ENCODE measurements at regions of chr17 and their contacts with region 1.

Region 1: DNA sequence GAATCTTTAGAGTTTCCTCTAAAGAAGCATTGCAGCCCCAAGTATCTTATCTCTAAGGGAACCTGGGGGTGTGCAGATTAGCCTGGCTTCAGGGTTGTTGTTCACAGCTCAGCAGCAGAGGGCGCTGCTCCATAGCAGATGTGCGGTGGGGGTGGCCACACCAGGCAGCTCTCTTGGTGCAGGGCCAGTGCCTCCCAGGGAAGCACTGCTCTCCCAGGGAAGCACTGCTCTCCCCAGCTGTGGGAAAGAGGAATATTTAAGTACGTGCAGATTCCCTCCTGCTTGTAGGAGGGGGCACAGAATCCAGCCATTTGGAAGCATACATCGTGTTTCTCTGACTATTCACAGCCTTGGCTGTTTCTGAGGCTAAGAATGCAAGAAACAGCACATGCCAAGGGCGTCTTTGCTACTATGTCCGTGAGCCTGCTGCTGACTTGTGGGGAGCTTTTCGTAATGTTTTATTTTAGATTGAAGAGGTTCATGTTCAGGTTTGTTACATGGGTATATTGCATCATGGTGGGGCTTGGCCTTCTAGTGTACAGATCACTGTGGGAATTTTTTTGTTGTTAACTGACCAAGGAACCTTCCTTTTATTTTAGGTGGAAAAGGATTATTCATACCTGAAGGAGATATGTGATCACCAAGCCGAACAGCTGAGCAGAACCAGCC is 217.8 kb downstream of the SPECC1 start:
- DNase-seq: peak; percentile 80 to 85
- ATAC-seq: peak; percentile 95 to 97
- H3K4me3 ChIP-seq: no peak overlapping the region
- H3K27ac ChIP-seq: peak overlapping the region; percentile 62 to 83
- H3K4me1 ChIP-seq: peaks cover 64% of the 10 kb centered on the region
- CTCF ChIP-seq: peak; percentile 92
- EP300 ChIP-seq: no peak
- POLR2A ChIP-seq: no peak
- RAD21 ChIP-seq: peak; percentile 89 to 91

Region 2: GRCh38 chr17:20063665-20064648 is 163.0 kb before region 1 on chr17:
- CTCF ChIA-PET with region 1: no interaction called
- POLR2A ChIA-PET with region 1: no interaction called
- DNase-seq: peak; percentile 86 to 91
- ATAC-seq: peak; percentile 84 to 86
- H3K4me3 ChIP-seq: peak overlapping the region; percentile 1; the same call in 1 of the 3 replicates
- H3K27ac ChIP-seq: peak overlapping the region; percentile 89 to 90
- H3K4me1 ChIP-seq: peaks cover 77% of the 10 kb centered on the region
- CTCF ChIP-seq: no peak
- EP300 ChIP-seq: peak; percentile 22 to 56; a peak in 2 of 5 replicates
- POLR2A ChIP-seq: no peak
- RAD21 ChIP-seq: peak in 1 of 2 experiments; percentile 13; a peak in 2 of 5 replicates

Region 3: DNA sequence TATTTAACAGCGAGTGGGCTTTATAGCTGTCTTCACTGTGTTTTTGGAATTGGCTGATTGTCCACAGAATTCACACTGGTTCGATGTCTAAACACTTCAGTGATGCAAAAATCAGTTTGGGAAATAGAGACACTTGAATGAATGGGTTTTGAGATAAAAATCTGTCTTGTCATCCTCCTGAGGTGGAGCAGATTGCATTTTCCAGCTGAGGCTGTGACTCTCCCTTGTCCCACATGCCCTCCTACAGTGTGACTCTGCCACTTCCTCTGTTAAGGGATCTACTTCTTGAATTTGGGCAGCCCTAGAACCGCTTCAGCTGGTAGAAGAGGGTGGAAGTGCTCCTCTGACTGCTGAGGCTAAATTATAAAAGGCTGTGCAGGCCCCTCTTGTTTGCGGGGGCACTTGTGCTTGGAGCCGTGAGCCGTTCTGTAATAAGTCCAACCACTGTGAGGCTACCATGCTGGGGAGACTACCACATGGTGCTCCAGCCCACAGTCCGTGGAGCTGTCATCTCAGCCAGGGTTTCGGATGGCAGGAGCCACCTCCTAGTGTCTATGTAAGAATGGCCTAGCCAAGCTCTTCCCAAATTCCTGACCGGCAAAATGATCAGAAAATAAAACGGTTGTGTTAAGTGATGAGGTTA is 41.9 kb before region 1 on chr17:
- CTCF ChIA-PET with region 1: interaction called, 13 read pairs
- POLR2A ChIA-PET with region 1: no interaction called
- DNase-seq: peak in 1 of 2 experiments; percentile 29
- ATAC-seq: peak in 1 of 2 experiments; percentile 36; a peak in 3 of 6 replicates
- H3K4me3 ChIP-seq: no peak overlapping the region
- H3K27ac ChIP-seq: peak overlapping the region in 1 of 2 experiments; percentile 44; a peak in 3 of 6 replicates
- H3K4me1 ChIP-seq: peaks cover 50% of the 10 kb centered on the region
- CTCF ChIP-seq: no peak
- EP300 ChIP-seq: no peak
- POLR2A ChIP-seq: no peak
- RAD21 ChIP-seq: no peak

Region 4: DNA sequence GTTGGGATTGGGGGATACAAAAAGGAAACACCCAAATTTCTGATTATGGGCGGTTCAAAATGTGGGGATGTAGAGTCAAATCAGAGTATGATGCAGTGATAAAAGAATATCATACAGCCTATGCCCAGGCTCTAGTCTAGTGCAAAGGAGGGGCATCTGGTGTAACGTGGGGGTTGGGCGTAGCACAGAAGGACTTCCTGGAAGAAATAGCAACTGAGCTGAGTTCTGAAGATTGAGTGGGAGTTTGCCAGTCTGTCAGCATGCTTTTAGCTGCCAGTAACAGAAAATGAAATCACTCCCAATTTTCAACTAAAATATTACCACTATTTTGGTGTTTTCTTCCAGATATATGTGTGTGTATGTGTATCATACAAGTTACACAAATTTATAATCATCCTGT is 20.9 kb before region 1 on chr17:
- CTCF ChIA-PET with region 1: interaction called, 68 read pairs
- POLR2A ChIA-PET with region 1: interaction called, 6 read pairs
- DNase-seq: peak; percentile 44 to 74
- ATAC-seq: peak; percentile 83 to 87
- H3K4me3 ChIP-seq: no peak overlapping the region
- H3K27ac ChIP-seq: peak overlapping the region; percentile 88 to 92
- H3K4me1 ChIP-seq: peaks cover 75% of the 10 kb centered on the region
- CTCF ChIP-seq: no peak
- EP300 ChIP-seq: no peak
- POLR2A ChIP-seq: no peak
- RAD21 ChIP-seq: no peak

Region 5: GRCh38 chr17:20244671-20245070 is 17.7 kb after region 1 on chr17:
- CTCF ChIA-PET with region 1: interaction called, 23 read pairs
- POLR2A ChIA-PET with region 1: no interaction called
- DNase-seq: no peak
- ATAC-seq: no peak
- H3K4me3 ChIP-seq: no peak overlapping the region
- H3K27ac ChIP-seq: no peak overlapping the region
- H3K4me1 ChIP-seq: no peaks in the 10 kb centered on the region
- CTCF ChIP-seq: no peak
- EP300 ChIP-seq: no peak
- POLR2A ChIP-seq: no peak
- RAD21 ChIP-seq: no peak

Region 6: DNA sequence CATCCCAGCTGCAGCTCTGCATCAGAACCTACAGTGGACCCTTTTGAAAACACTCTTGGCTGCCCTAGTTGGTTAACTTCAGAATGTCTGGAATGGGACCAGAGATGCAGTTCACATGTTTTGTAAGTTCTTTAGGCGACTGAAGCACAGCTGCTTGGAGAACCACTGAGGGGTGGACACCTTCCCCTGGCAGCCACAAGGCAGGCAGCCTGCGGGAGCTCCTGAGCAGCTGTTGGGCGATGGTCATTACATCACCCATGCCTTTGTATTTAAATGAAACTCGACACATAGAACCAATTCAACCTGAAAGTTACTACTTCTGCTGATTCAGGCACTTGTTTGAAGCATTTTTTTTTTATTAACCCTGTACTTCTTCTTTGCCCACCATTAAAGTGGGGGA is 88.9 kb after region 1 on chr17:
- CTCF ChIA-PET with region 1: interaction called, 24 read pairs
- POLR2A ChIA-PET with region 1: no interaction called
- DNase-seq: no peak
- ATAC-seq: no peak
- H3K4me3 ChIP-seq: no peak overlapping the region
- H3K27ac ChIP-seq: no peak overlapping the region
- H3K4me1 ChIP-seq: no peaks in the 10 kb centered on the region
- CTCF ChIP-seq: no peak
- EP300 ChIP-seq: no peak
- POLR2A ChIP-seq: no peak
- RAD21 ChIP-seq: no peak